Dorsolateral prefrontal cortex (tissue), 120 donors: ENCODE measurements at regions of chr21 and their contacts with region 1.

Region 1: DNA sequence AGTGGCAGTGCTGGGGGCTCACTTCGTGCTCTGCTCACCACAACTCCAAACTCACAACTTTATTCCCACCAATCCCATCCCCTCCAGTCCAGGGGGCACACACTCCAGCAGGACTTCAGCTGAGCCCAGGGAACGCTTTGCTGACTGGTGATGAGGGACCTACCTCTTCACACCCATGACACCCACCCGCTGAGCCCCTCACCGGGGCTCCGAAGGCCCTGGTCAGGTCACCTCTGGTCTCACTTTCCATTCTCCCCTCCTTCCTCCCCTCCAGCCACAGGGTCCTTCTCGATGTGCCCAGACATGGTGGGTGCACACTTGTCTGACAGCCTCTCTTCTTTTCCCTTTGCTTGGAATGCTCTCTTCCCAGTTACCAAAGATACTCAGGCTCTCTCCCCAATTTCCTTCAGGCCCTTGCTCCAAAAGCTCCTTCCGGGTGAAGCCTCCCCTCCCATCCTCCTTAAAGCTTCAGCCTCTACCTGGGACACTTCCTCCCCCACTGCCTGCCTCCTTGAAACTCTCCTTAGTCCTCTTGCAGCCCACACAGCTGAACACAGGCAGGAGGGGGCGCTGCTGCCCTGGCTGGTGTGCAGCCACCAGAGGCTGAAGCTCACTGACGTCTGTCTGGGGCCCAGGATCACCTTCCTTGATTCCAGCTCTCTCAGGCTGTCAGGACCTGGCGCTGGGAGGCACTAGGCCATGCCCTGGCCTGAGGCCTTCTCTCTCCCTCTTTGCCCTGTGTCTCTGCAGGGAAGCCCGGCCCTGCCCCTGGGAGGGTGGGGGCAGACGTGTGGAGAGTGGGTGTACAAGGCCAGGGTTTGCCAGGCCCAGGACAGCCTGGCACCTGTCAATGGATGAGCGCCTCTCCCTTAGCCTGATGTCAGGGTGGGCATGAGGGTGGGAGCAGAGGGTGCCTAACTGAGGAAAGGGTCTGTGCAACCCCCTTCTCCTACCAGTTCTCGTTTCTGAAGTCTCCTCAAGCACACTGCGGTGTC is 1.6 kb downstream of the KCNE1 start:
- DNase-seq: peak in 5 of 10 donors; percentile 36 to 74 (median 48)
- H3K4me3 ChIP-seq: peak overlapping the region in 1 of 59 donors; percentile 4
- H3K27ac ChIP-seq: no peak overlapping the region
- H3K27me3 ChIP-seq: peaks cover 0 to 2% (median 0%) of the 10 kb centered on the region in 45 donors
- CTCF ChIP-seq: peak in 55 of 56 donors; percentile 25 to 82 (median 64)

Region 2: DNA sequence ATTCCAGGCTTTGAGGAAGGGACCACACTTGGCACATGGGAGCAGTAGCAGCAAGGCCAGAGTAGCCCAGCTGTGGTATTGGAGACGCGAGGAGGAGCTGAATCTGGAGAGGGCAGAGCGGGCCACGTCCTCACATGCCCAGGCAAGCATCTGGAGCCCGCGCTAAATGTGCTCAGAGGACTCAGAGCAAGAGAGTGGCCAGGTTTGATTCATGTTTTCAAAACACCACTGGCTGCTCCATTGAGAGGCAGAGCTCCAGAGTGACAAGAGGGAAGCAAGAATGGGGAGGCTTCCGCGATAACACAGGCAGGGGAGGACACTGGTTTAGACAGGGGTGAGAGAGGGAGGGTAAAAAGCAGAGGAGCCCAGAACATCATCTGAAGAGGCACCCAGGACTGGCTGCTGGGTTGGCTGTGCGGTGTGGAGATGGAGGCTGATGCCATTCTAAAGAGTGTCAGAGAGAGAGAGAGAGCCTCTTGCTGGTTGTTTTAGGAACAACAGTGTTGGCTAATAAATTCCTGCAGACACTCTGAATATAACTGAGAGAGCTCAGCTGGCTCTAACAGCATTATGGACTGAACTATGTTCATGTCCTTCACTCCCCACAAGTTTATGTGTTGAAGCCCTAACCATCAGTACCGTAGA is 72.2 kb after region 1 on chr21:
- intact Hi-C with region 1: loop called in 1 of 2 experiments (anchors 1 kb)
- DNase-seq: no peak
- H3K4me3 ChIP-seq: no peak overlapping the region
- H3K27ac ChIP-seq: peak overlapping the region in 4 of 59 donors; percentile 13 to 49 (median 29)
- H3K27me3 ChIP-seq: no peaks in the 10 kb centered on the region
- CTCF ChIP-seq: peak in 52 of 56 donors; percentile 19 to 72 (median 46)